ENCODE measurements at regions of chr11 and their contacts with region 1.

Region 1: DNA sequence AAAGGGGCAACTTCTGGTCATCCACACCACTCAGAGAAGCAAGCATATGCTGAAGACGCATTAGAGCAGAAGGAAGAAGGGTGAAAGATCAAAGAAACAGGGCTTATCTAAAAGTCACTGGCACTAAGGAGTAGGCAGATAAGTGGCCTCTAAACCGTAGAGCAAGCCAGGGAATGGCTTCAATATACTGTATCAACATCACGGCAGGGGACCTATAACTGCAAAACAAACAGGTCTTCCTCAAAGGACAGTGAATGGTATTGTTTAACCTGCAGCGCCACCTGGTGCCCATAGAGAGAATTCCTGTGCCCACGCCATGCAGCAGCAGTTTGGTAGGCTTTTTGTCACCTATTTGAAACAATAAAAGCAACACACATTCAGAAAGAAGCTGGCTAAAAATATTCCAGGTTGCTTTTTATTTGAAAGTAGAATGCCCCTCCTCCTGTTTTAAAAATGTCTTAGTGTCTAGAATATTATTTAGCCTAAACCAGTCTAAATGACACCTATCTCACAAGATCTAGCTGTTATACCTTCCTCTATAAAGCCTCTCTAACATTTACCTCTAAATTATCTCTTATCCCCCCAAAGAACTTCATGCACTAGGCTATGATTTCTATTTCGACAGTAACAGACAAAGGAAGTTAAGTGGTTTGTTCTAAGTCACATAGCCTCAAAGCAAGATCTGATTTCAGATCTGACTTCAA is 21.8 kb downstream of the SNX19 start:
- DNase-seq: peak; percentile 81
- ATAC-seq: peak; percentile 29

Region 2: DNA sequence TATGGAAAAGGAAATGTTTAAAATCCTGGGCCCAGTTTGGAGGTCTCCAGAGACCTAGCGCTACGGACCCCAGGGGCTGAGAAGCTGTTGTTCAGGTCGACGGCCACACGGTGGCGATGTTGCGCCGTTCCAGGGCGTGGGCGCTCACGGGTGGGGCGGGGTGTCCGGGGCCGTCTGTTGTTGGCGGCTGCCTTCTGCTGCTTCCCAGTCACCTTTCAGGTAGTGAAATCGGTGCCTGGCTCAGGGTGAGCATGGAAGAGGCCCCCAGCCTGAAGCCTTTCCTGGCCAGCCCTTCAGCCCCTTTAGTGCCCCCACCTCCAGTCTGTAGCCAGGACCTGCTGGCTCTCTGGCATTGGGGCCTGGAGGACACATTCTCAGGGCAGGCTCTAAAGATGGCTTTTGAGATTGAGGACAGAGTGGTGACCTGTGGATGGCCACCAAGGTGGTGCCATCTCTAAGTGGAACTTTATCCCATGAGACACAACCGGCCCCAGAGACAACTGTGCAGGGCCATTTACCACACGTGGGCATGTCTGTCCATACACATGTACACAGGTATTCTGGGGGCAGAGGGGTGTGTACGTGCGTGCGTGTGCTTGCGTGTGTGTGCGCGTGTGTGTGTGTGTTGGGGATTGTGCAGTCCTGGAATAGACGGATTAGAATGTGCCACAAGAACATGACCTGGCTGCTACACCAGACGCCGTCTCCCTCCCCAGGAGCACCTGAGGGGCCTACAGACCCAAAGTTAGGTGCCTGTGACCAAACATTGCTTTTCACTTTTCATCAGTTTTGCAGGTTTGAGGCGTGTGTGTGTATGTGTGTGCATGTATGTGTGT is 681.1 kb before region 1 on chr11:
- intact Hi-C with region 1: loop called (anchors 10 kb)
- DNase-seq: no peak
- ATAC-seq: peak; percentile 79

Region 3: GRCh38 chr11:130434521-130435223 is 459.8 kb before region 1 on chr11:
- intact Hi-C with region 1: loop called (anchors 1 kb)
- DNase-seq: peak; percentile 76
- ATAC-seq: peak; percentile 90

Region 4: GRCh38 chr11:130861902-130862860 is 32.3 kb before region 1 on chr11:
- intact Hi-C with region 1: loop called (anchors 1 kb)
- DNase-seq: peak; percentile 96
- ATAC-seq: peak; percentile 66